Activated naive CD8-positive, alpha-beta T cell treated with anti-CD3 and anti-CD28 coated beads, Interleukin-2, amount 10 ng/mL, durations not matched to agents 7 days and 5 days (primary cell): ENCODE measurements at regions of chr9 and their contacts with region 1.

Region 1: GRCh38 chr9:136849038-136849959 is at the start of gene PHPT1:
- DNase-seq: peak; percentile 97
- ATAC-seq: peak; percentile 89
- H3K4me3 Mint-ChIP-seq: peak within 1 kb of the TSS; percentile 96
- H3K27ac Mint-ChIP-seq: peak within 1 kb of the TSS; percentile 92
- H3K4me1 Mint-ChIP-seq: peaks cover 5% of the 10 kb centered on the region
- H3K27me3 Mint-ChIP-seq: peaks cover 10% of the 10 kb centered on the region
- total RNA-seq, gene PHPT1: 80.5 to 89.0 TPM

Region 2: GRCh38 chr9:136728080-136728547 is 121.2 kb before region 1 on chr9:
- POLR2A ChIA-PET with region 1: no interaction called
- DNase-seq: peak; percentile 98
- ATAC-seq: peak; percentile 75
- H3K4me3 Mint-ChIP-seq: peak overlapping the region; percentile 98
- H3K27ac Mint-ChIP-seq: no peak overlapping the region
- H3K4me1 Mint-ChIP-seq: peaks cover 23% of the 10 kb centered on the region
- H3K27me3 Mint-ChIP-seq: peaks cover 2% of the 10 kb centered on the region

Region 3: GRCh38 chr9:136807281-136808074 is 41.8 kb before region 1 on chr9 and contains the start of gene RABL6:
- POLR2A ChIA-PET with region 1: interaction called, 12 read pairs
- DNase-seq: peak; percentile 94
- ATAC-seq: peak; percentile 90
- H3K4me3 Mint-ChIP-seq: peak within 1 kb of the TSS; percentile 89
- H3K27ac Mint-ChIP-seq: peak within 1 kb of the TSS; percentile 90
- H3K4me1 Mint-ChIP-seq: peaks cover 29% of the 10 kb centered on the region
- H3K27me3 Mint-ChIP-seq: no peaks in the 10 kb centered on the region
- total RNA-seq, gene RABL6: 91.1 to 98.4 TPM

Region 4: DNA sequence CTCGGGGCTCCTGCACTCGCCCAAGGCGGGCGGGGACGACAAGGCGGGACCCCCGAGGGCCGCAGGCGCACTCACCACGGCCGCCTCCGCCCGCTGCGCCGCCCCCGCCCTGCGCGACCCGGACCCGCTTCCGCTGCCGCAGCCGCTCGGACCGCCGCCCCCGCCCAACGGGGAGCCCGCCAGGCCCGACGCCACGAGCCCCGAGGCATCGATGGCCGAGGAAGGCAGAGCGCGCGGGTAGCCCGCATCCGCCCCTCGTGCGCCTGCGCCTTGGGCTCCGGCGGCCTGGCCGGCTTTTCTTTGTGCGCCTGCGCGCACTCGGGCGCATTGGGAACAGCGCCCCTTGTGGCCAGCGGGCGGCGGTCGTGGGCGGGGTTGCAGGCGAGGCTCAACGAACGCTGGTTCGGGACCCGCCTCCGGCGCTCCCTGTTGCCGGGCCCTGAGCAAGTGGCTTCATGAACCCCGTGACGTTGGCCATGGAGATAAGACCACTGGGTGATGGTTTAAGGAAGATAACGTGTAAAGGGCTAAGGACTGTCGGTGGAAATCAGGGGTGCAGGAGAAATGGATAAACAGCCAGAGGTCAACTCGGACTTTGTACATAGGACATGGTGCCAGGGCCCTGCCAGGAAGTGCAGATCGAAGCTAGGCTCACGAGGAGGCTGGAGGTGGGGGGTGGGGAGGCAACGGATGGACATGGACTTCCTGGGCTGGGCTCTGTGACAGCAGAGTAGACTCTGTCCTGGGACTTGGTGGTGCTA is 95.4 kb after region 1 on chr9 and contains the starts of genes C8G and FBXW5:
- POLR2A ChIA-PET with region 1: interaction called, 12 read pairs
- DNase-seq: peak; percentile 99
- ATAC-seq: peak; percentile 77
- H3K4me3 Mint-ChIP-seq: peak within 1 kb of the TSS; percentile 82
- H3K27ac Mint-ChIP-seq: peak within 1 kb of the TSS; percentile 86
- H3K4me1 Mint-ChIP-seq: peaks cover 4% of the 10 kb centered on the region
- H3K27me3 Mint-ChIP-seq: no peaks in the 10 kb centered on the region
- total RNA-seq, gene C8G: 1.5 to 3.6 TPM
- total RNA-seq, gene FBXW5: 103 to 104 TPM